ENCODE measurements at regions of chr2 and their contacts with region 1.

Region 1: GRCh38 chr2:41782306-41783158 is 265.3 kb upstream of the PKDCC start:
- DNase-seq: peak in 5 of 9 donors; percentile 13 to 41 (median 34)
- ATAC-seq: no peak
- H3K4me3 ChIP-seq: no peak overlapping the region
- H3K4me3 Mint-ChIP-seq: no peak overlapping the region
- H3K27ac ChIP-seq: no peak overlapping the region
- H3K27ac Mint-ChIP-seq: no peak overlapping the region
- H3K4me1 ChIP-seq: no peaks in the 10 kb centered on the region
- H3K4me1 Mint-ChIP-seq: no peaks in the 10 kb centered on the region
- H3K27me3 ChIP-seq: no peaks in the 10 kb centered on the region
- H3K27me3 Mint-ChIP-seq: peaks cover 6 to 26% (median 9%) of the 10 kb centered on the region in 5 donors

Region 2: DNA sequence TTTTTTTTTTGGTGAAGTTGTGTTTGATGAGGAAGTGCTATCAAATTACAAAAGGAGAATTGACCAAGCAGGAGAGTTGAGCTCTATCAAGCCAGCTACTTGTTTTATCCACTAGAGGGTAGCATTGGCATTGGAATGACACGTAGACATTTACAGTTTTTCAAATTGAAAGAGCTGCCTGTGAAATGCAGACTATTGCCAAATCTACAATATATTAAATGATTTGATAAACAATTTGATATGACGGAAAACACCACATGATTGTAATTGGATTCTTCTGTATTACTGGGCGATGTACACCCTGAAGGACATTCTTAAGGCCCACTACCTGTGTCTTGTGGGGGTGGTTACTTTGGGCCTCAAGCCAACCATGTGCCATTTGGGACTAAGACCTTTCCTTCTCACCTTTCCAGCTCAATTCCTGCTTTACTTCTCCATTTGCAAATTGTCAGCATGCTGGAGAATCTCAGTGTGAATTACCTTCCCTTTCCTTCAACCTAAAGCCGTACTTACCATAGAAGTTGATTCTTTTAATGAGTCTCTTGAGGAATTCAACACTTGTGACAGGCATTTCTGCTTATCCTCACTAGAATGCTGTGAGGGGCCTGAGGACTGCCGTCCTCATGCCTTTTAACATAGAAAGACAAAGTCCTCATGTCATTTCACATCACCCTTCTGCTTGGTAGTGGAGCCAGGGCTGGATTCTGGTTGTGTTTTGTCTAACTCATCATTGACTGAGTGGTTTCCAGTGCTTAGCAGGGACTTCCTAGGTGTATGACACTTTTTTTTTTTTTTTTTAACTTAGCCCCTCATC is 1868.7 kb before region 1 on chr2:
- CTCF ChIA-PET with region 1: interaction called, 3 read pairs
- POLR2A ChIA-PET with region 1: no interaction called
- intact Hi-C with region 1: loop called in 1 of 2 experiments (anchors 1 kb)
- DNase-seq: peak in 5 of 9 donors; percentile 5 to 36 (median 17)
- ATAC-seq: peak; percentile 61
- H3K4me3 ChIP-seq: no peak overlapping the region
- H3K4me3 Mint-ChIP-seq: no peak overlapping the region
- H3K27ac ChIP-seq: no peak overlapping the region
- H3K27ac Mint-ChIP-seq: no peak overlapping the region
- H3K4me1 ChIP-seq: no peaks in the 10 kb centered on the region
- H3K4me1 Mint-ChIP-seq: peaks cover 0 to 28% (median 0%) of the 10 kb centered on the region in 7 donors
- H3K27me3 ChIP-seq: no peaks in the 10 kb centered on the region
- H3K27me3 Mint-ChIP-seq: peaks cover 0 to 26% (median 10%) of the 10 kb centered on the region in 5 donors

Region 3: GRCh38 chr2:40244675-40245074 is 1537.9 kb before region 1 on chr2:
- CTCF ChIA-PET with region 1: no interaction called
- POLR2A ChIA-PET with region 1: no interaction called
- intact Hi-C with region 1: loop called in 1 of 2 experiments (anchors 5 kb)
- DNase-seq: no peak
- ATAC-seq: no peak
- H3K4me3 ChIP-seq: no peak overlapping the region
- H3K4me3 Mint-ChIP-seq: no peak overlapping the region
- H3K27ac ChIP-seq: no peak overlapping the region
- H3K27ac Mint-ChIP-seq: no peak overlapping the region
- H3K4me1 ChIP-seq: no peaks in the 10 kb centered on the region
- H3K4me1 Mint-ChIP-seq: peaks cover 0 to 4% (median 0%) of the 10 kb centered on the region in 7 donors
- H3K27me3 ChIP-seq: no peaks in the 10 kb centered on the region
- H3K27me3 Mint-ChIP-seq: no peaks in the 10 kb centered on the region

Region 4: GRCh38 chr2:40448468-40449079 is 1334.0 kb before region 1 on chr2:
- CTCF ChIA-PET with region 1: no interaction called
- POLR2A ChIA-PET with region 1: no interaction called
- intact Hi-C with region 1: loop called in 1 of 2 experiments (anchors 5 kb)
- DNase-seq: no peak
- ATAC-seq: no peak
- H3K4me3 ChIP-seq: no peak overlapping the region
- H3K4me3 Mint-ChIP-seq: no peak overlapping the region
- H3K27ac ChIP-seq: no peak overlapping the region
- H3K27ac Mint-ChIP-seq: no peak overlapping the region
- H3K4me1 ChIP-seq: no peaks in the 10 kb centered on the region
- H3K4me1 Mint-ChIP-seq: peaks cover 6 to 25% (median 18%) of the 10 kb centered on the region in 7 donors
- H3K27me3 ChIP-seq: peaks cover 0 to 3% of the 10 kb centered on the region in 2 donors
- H3K27me3 Mint-ChIP-seq: peaks cover 30 to 48% (median 46%) of the 10 kb centered on the region in 5 donors

Region 5: GRCh38 chr2:40554668-40555285 is 1227.8 kb before region 1 on chr2:
- CTCF ChIA-PET with region 1: no interaction called
- POLR2A ChIA-PET with region 1: no interaction called
- intact Hi-C with region 1: loop called in 1 of 2 experiments (anchors 10 kb)
- DNase-seq: peak in 6 of 9 donors; percentile 5 to 49 (median 12)
- ATAC-seq: peak; percentile 75
- H3K4me3 ChIP-seq: no peak overlapping the region
- H3K4me3 Mint-ChIP-seq: no peak overlapping the region
- H3K27ac ChIP-seq: no peak overlapping the region
- H3K27ac Mint-ChIP-seq: no peak overlapping the region
- H3K4me1 ChIP-seq: no peaks in the 10 kb centered on the region
- H3K4me1 Mint-ChIP-seq: peaks cover 0 to 2% (median 0%) of the 10 kb centered on the region in 7 donors
- H3K27me3 ChIP-seq: no peaks in the 10 kb centered on the region
- H3K27me3 Mint-ChIP-seq: peaks cover 0 to 7% (median 0%) of the 10 kb centered on the region in 5 donors

Region 6: DNA sequence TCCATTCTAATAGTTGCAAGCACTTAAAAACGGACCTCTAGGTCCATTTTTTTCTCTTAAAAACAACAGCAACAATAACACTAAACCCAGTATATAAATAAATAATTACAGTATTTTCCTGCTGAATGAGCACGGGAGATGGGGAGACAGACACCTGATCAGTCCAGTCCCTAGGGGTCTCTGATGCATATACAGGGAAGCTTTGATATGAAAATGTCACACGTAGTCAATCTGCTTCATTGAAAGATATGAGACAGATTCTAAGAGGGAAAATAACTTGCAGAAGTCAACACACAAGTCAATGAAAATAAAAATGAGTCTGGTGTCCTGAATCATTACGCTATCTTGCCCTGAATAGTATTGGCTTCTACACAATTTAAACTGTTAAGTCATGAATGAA is 807.4 kb before region 1 on chr2:
- CTCF ChIA-PET with region 1: no interaction called
- POLR2A ChIA-PET with region 1: no interaction called
- intact Hi-C with region 1: no loop called
- DNase-seq: no peak
- ATAC-seq: no peak
- H3K4me3 ChIP-seq: no peak overlapping the region
- H3K4me3 Mint-ChIP-seq: no peak overlapping the region
- H3K27ac ChIP-seq: no peak overlapping the region
- H3K27ac Mint-ChIP-seq: no peak overlapping the region
- H3K4me1 ChIP-seq: no peaks in the 10 kb centered on the region
- H3K4me1 Mint-ChIP-seq: no peaks in the 10 kb centered on the region
- H3K27me3 ChIP-seq: no peaks in the 10 kb centered on the region
- H3K27me3 Mint-ChIP-seq: no peaks in the 10 kb centered on the region

Region 7: DNA sequence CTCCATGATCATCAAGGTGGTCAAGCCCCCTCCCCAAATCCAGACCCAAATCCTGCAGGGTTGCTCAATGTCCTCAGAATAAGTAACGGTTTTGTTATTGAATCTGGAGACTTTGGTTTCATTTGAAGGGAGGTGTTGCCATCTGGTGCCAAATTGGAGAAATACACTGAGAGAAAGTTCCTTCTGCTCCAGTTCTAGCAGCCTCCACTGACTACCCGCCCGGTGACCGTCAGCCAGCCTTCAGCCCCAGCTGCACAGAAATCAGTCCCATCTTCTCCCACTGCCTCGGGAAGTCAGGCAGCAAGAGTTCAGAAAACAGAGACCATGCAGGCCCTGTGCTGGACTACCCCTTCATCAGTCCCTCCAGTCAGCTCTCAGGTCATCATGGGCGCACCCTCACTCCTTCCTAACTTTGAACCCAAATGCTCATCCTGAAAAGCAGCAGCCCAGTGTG is 304.0 kb after region 1 on chr2:
- CTCF ChIA-PET with region 1: no interaction called
- POLR2A ChIA-PET with region 1: no interaction called
- intact Hi-C with region 1: loop called in 1 of 2 experiments (anchors 1 kb)
- DNase-seq: peak in 7 of 9 donors; percentile 18 to 59 (median 50)
- ATAC-seq: peak; percentile 62
- H3K4me3 ChIP-seq: no peak overlapping the region
- H3K4me3 Mint-ChIP-seq: no peak overlapping the region
- H3K27ac ChIP-seq: no peak overlapping the region
- H3K27ac Mint-ChIP-seq: no peak overlapping the region
- H3K4me1 ChIP-seq: no peaks in the 10 kb centered on the region
- H3K4me1 Mint-ChIP-seq: peaks cover 0 to 10% (median 7%) of the 10 kb centered on the region in 7 donors
- H3K27me3 ChIP-seq: no peaks in the 10 kb centered on the region
- H3K27me3 Mint-ChIP-seq: peaks cover 0 to 25% (median 6%) of the 10 kb centered on the region in 5 donors